Sciatic nerve (tissue), 2 donors: ENCODE measurements at regions of chr1 and their contacts with region 1.

Region 1: GRCh38 chr1:232196042-232196441 is 433.9 kb downstream of the SIPA1L2 start:
- DNase-seq: no peak
- ATAC-seq: no peak

Region 2: GRCh38 chr1:230696722-230697437 is 1499.2 kb before region 1 on chr1:
- intact Hi-C with region 1: loop called (anchors 5 kb)
- DNase-seq: no peak
- ATAC-seq: no peak

Region 3: DNA sequence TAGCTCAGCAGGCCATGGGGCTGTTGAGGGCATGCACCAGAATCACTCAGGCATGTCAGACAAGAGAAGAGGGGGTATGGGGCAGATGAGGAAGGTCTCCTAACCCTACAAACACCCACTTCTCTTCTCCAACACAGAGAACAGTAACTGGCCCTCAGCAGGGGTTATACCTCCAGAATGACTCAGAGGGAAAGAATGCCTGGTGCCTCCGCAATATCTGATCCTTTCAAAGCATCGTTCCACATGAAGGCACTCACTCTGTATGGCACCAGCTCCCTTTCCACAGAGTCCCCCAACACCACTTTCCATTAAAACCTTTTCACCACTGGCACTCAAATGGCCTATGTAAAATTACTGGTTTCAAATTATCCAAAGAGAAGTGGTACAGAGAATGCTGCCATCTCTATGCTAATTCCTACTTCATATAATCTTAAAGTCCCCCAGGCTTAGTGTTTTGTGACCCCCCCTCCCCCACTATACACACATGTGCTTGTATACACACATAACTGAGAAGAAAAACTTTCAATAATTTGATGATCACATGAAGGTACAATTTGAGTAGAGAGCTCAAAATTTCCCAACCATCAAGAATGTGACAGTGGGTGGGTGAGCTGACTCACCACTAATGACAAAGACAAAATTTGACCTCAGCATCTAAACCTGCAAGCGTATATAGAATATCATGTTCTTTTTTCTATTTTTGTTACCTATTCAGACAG is 342.3 kb after region 1 on chr1:
- intact Hi-C with region 1: no loop called
- DNase-seq: no peak
- ATAC-seq: no peak

Region 4: DNA sequence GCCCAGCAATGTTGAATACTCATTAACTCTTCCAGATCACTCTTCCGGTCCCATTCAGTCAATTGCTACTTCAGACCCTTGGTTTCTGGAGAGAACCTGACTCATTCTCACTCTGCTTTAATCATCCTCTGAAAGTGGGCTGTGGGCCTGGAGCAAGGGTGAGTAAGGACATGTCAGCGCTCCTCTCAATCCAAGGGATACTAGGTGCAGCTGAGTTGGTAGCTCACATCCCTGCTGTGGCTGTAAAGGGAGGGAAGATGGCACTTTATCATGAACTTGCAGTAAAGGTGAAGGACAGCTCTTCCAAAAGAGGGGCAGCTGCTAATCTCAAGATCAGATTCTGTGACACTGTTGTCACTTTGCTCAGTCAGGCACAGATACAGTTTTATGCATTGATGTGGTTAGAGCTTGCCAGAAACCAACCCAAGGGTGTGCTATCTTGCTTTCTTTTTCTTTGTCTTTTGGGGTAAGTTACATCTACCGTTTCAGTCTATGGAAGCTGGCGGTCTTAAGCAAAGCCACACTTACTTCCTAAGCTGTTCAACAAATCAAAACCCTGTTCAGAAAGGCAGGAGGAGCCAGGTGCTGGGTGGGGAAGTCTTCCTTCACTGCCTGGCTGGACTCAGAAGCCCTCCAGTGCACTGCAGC is 727.8 kb after region 1 on chr1:
- intact Hi-C with region 1: no loop called
- DNase-seq: no peak
- ATAC-seq: no peak